PC-3 (cell line): ENCODE measurements at regions of chr6 and their contacts with region 1.

Region 1: GRCh38 chr6:37860226-37860839 is 40.8 kb downstream of the ZFAND3 start:
- DNase-seq: peak; percentile 64
- ATAC-seq: no peak
- H3K4me3 ChIP-seq: no peak overlapping the region
- H3K27ac ChIP-seq: no peak overlapping the region
- H3K4me1 ChIP-seq: peaks cover 43% of the 10 kb centered on the region
- H3K27me3 ChIP-seq: no peaks in the 10 kb centered on the region
- CTCF ChIP-seq: peak; percentile 78

Region 2: GRCh38 chr6:36839749-36840431 is 1020.4 kb before region 1 on chr6:
- CTCF ChIA-PET with region 1: no interaction called
- POLR2A ChIA-PET with region 1: no interaction called
- intact Hi-C with region 1: no loop called
- DNase-seq: peak; percentile 22
- ATAC-seq: peak; percentile 56
- H3K4me3 ChIP-seq: peak overlapping the region; percentile 59
- H3K27ac ChIP-seq: no peak overlapping the region
- H3K4me1 ChIP-seq: peaks cover 5% of the 10 kb centered on the region; the same call in 1 of the 2 replicates
- H3K27me3 ChIP-seq: peaks cover 21% of the 10 kb centered on the region
- CTCF ChIP-seq: peak; percentile 19; the same call in 1 of the 2 replicates

Region 3: GRCh38 chr6:37005061-37005810 is 855.1 kb before region 1 on chr6 and contains the start of gene FGD2:
- CTCF ChIA-PET with region 1: no interaction called
- POLR2A ChIA-PET with region 1: no interaction called
- intact Hi-C with region 1: no loop called
- DNase-seq: no peak
- ATAC-seq: no peak
- H3K4me3 ChIP-seq: no peak within 1 kb of the TSS
- H3K27ac ChIP-seq: no peak within 1 kb of the TSS
- H3K4me1 ChIP-seq: no peaks in the 10 kb centered on the region
- H3K27me3 ChIP-seq: no peaks in the 10 kb centered on the region
- CTCF ChIP-seq: no peak
- total RNA-seq, gene FGD2: 0.35 and 0.44 TPM in 2 replicates

Region 4: GRCh38 chr6:37705239-37706051 is 154.9 kb before region 1 on chr6:
- CTCF ChIA-PET with region 1: interaction called, 10 read pairs
- POLR2A ChIA-PET with region 1: no interaction called
- intact Hi-C with region 1: no loop called
- DNase-seq: peak; percentile 53
- ATAC-seq: peak; percentile 26; the same call in 1 of the 2 replicates
- H3K4me3 ChIP-seq: peak overlapping the region; percentile 55
- H3K27ac ChIP-seq: no peak overlapping the region
- H3K4me1 ChIP-seq: peaks cover 5% of the 10 kb centered on the region; the same call in 1 of the 2 replicates
- H3K27me3 ChIP-seq: no peaks in the 10 kb centered on the region
- CTCF ChIP-seq: peak; percentile 63

Region 5: GRCh38 chr6:37791156-37791919 is 69.0 kb before region 1 on chr6:
- CTCF ChIA-PET with region 1: interaction called, 12 read pairs
- POLR2A ChIA-PET with region 1: no interaction called
- intact Hi-C with region 1: loop called (anchors 1 kb)
- DNase-seq: peak; percentile 98
- ATAC-seq: peak; percentile 97
- H3K4me3 ChIP-seq: no peak overlapping the region
- H3K27ac ChIP-seq: no peak overlapping the region
- H3K4me1 ChIP-seq: peaks cover 23% of the 10 kb centered on the region
- H3K27me3 ChIP-seq: no peaks in the 10 kb centered on the region
- CTCF ChIP-seq: peak; percentile 94

Region 6: DNA sequence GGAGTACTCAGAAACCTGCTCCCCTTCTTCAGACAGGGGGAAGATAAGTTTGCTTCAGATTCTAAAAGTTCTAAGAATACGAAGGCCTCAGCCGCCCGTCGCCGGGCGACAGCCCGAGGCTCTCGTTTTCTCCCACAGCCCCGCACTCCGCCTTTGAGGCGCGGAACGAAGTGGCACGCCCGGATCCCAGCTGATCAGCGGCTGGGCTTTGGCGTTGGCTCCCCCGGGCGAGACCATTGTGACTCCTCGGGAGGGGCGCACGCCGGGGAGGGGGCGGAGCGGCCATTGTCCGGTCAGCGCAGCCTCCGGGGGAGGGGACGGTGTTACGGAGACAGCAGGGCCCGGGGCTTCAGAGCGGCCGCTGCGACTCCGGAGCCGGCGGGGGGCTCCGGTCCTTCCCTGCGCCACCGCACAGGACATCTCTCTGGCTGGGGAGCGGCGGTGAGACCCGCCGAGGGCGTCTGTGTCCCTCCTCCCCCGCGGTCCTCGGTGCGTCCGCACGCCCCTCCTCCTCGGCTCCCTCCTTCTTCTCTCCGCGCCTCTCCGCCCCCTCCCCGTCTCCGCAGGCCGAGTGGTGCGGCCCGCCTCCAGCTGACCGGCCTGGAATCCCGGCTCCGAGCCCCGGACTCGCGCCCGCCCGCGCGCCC is 41.0 kb before region 1 on chr6 and contains the start of gene ZFAND3:
- CTCF ChIA-PET with region 1: no interaction called
- POLR2A ChIA-PET with region 1: interaction called, 6 read pairs
- intact Hi-C with region 1: loop called (anchors 2 kb)
- DNase-seq: peak; percentile 95
- ATAC-seq: peak; percentile 78
- H3K4me3 ChIP-seq: peak within 1 kb of the TSS; percentile 87
- H3K27ac ChIP-seq: peak within 1 kb of the TSS; percentile 81
- H3K4me1 ChIP-seq: peaks cover 36% of the 10 kb centered on the region
- H3K27me3 ChIP-seq: no peaks in the 10 kb centered on the region
- CTCF ChIP-seq: no peak
- total RNA-seq, gene ZFAND3: 22.2 and 23.7 TPM in 2 replicates

Region 7: GRCh38 chr6:37882724-37883413 is 22.5 kb after region 1 on chr6:
- CTCF ChIA-PET with region 1: interaction called, 13 read pairs
- POLR2A ChIA-PET with region 1: no interaction called
- intact Hi-C with region 1: no loop called
- DNase-seq: peak; percentile 31
- ATAC-seq: peak; percentile 81
- H3K4me3 ChIP-seq: no peak overlapping the region
- H3K27ac ChIP-seq: no peak overlapping the region
- H3K4me1 ChIP-seq: peaks cover 9% of the 10 kb centered on the region; the same call in 1 of the 2 replicates
- H3K27me3 ChIP-seq: no peaks in the 10 kb centered on the region
- CTCF ChIP-seq: no peak

Region 8: GRCh38 chr6:37897321-37897720 is 37.0 kb after region 1 on chr6:
- CTCF ChIA-PET with region 1: no interaction called
- POLR2A ChIA-PET with region 1: no interaction called
- intact Hi-C with region 1: loop called (anchors 5 kb)
- DNase-seq: peak; percentile 79
- ATAC-seq: peak; percentile 68
- H3K4me3 ChIP-seq: peak overlapping the region; percentile 28; the same call in 1 of the 2 replicates
- H3K27ac ChIP-seq: 0 out of 2 replicates have a peak overlapping the region, but pooled peaks have one; percentile 4
- H3K4me1 ChIP-seq: peaks cover 26% of the 10 kb centered on the region
- H3K27me3 ChIP-seq: no peaks in the 10 kb centered on the region
- CTCF ChIP-seq: no peak

Region 9: DNA sequence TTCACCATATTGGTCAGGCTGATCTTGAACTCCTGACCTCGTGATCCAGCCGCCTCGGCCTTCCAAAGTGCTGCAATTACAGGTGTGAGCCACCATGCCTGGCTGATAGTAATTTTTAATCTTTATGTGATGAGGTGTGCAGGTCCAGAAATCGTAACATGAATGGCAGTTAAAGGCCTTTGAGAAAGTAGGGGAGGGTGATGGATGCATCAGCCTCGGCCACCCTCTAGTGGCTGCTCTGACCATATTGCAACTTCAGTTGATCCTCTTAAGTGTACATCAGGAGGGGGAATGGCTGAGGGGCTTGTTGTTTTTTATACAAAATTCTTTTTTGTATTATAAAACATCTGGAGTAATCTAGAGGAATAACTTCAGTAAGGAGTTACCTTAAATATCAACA is 152.2 kb after region 1 on chr6:
- CTCF ChIA-PET with region 1: interaction called, 3 read pairs
- POLR2A ChIA-PET with region 1: no interaction called
- intact Hi-C with region 1: loop called (anchors 10 kb)
- DNase-seq: peak; percentile 67
- ATAC-seq: peak; percentile 90
- H3K4me3 ChIP-seq: no peak overlapping the region
- H3K27ac ChIP-seq: no peak overlapping the region
- H3K4me1 ChIP-seq: no peaks in the 10 kb centered on the region
- H3K27me3 ChIP-seq: no peaks in the 10 kb centered on the region
- CTCF ChIP-seq: peak; percentile 91

Region 10: DNA sequence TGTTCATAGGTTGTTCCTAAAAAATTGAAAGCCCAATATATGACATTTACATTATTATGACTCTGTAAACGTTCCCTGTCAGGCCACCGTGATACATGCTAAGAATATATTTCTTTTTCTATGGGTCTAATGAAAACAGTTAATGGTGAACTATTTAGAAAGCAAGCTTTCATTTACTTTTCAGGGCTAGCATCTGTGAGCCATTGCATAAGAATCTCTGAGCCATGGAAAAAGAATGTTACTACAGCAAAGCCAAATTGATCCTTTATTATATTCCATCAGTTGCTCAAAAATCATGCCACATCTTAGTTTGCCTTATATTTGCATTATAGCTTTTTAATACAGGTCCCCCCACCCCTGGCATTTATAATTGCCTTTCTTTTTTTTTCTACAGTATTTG is 234.7 kb after region 1 on chr6:
- CTCF ChIA-PET with region 1: no interaction called
- POLR2A ChIA-PET with region 1: no interaction called
- intact Hi-C with region 1: no loop called
- DNase-seq: peak; percentile 76
- ATAC-seq: peak; percentile 81
- H3K4me3 ChIP-seq: no peak overlapping the region
- H3K27ac ChIP-seq: no peak overlapping the region
- H3K4me1 ChIP-seq: peaks cover 17% of the 10 kb centered on the region
- H3K27me3 ChIP-seq: no peaks in the 10 kb centered on the region
- CTCF ChIP-seq: no peak